Activated CD4-positive, alpha-beta T cell treated with anti-CD3 and anti-CD28 coated beads for 36 hours (primary cell): ENCODE measurements at regions of chr14 and their contacts with region 1.

Region 1: DNA sequence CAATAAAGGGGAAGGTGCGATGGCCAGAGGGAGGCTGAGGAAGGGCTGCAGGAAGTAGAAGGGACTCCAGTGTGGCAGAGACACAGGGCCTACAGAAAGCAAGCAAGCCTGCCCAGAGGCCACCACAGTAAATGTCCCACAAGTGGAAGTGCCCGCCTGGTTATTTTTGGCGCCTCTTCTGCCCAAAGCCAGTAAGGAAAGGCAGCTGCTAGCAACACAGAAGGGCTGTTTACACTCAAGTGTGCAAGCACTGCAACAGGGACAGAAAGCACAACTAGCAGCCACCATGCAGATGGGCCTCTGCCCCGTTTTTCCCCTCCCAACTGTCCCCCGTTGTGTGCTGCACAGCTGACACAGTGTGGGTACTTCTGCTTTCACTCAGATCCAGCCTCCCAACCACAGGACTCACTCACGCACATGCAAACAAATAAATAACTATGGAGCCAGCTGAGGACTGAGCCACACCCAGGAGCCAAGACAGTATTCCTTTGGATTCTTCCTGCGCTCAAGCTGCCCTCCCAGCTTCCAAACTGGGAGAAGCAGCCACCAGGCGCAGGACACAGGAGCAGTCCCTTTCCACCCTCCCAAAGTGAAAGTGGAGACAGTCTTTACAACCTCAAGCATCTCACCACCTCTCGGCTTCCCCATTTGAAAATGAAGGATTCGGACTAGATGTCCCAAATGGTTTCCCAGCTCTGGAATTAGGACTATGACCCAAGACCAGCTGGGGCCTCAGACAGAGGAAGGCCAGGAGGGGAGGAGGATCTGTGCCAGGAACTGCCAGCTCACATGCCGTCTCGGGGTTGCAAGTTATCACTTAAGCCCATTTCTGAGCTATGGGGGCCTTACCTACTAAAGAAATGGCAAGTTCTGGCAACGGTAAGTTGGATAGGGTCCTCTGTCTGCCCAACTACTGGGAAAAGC is 40.0 kb upstream of the PNMA1 start:
- DNase-seq: peak; percentile 80
- ATAC-seq: peak; percentile 45
- H3K4me3 Mint-ChIP-seq: peak overlapping the region; percentile 84
- H3K27ac Mint-ChIP-seq: peak overlapping the region; percentile 94
- H3K4me1 Mint-ChIP-seq: peaks cover 87% of the 10 kb centered on the region
- H3K27me3 Mint-ChIP-seq: no peaks in the 10 kb centered on the region

Region 2: DNA sequence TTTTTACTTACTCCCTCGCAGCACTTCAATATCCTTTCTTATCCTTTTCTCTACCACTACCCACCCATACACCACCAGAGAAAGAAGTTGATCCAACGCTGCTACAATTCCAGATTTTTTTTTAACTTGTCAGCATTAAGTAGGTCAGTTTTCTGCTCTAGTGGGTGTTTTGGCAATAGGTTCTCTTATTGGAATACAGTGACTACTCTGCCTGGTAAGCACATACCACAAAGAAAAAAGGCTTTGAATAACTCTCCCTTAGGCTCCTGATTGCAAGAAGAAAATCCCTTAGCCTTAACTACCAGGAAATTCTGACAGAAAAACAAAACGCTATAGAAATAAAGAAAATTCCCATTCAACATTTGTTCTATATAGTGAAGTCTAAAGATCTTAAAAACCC is 367.9 kb before region 1 on chr14:
- CTCF ChIA-PET with region 1: no interaction called
- POLR2A ChIA-PET with region 1: no interaction called
- intact Hi-C with region 1: no loop called
- DNase-seq: no peak
- ATAC-seq: no peak
- H3K4me3 Mint-ChIP-seq: no peak overlapping the region
- H3K27ac Mint-ChIP-seq: no peak overlapping the region
- H3K4me1 Mint-ChIP-seq: no peaks in the 10 kb centered on the region
- H3K27me3 Mint-ChIP-seq: no peaks in the 10 kb centered on the region

Region 3: DNA sequence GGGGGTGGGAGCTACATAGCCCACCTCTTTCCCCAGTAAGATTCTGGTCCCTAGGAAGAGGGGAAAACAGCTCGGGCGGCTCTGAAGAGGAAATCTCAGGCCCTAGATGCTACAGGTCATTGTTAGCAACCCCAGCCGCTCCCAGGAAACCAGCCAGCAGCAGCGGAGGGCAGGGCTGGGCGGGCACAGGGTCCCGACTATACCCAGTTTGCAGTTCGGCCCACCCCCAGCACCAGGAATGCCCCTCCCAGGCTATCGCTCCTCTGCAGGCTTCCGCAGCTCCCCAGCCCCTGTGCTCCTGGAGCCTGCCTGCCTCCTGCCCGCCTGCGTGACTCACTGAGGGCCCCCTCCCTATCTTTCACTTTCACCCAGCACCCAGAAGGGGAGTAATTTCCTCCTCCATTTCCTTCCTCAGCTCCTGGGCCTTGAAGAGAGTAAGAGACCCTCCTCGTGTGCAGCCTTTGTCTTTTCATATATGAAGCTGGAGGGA is 12.8 kb before region 1 on chr14:
- CTCF ChIA-PET with region 1: interaction called, 116 read pairs
- POLR2A ChIA-PET with region 1: interaction called, 9 read pairs
- intact Hi-C with region 1: loop called (anchors 1 kb)
- DNase-seq: peak; percentile 85
- ATAC-seq: peak; percentile 80
- H3K4me3 Mint-ChIP-seq: peak overlapping the region; percentile 66
- H3K27ac Mint-ChIP-seq: peak overlapping the region; percentile 82
- H3K4me1 Mint-ChIP-seq: peaks cover 65% of the 10 kb centered on the region
- H3K27me3 Mint-ChIP-seq: no peaks in the 10 kb centered on the region

Region 4: DNA sequence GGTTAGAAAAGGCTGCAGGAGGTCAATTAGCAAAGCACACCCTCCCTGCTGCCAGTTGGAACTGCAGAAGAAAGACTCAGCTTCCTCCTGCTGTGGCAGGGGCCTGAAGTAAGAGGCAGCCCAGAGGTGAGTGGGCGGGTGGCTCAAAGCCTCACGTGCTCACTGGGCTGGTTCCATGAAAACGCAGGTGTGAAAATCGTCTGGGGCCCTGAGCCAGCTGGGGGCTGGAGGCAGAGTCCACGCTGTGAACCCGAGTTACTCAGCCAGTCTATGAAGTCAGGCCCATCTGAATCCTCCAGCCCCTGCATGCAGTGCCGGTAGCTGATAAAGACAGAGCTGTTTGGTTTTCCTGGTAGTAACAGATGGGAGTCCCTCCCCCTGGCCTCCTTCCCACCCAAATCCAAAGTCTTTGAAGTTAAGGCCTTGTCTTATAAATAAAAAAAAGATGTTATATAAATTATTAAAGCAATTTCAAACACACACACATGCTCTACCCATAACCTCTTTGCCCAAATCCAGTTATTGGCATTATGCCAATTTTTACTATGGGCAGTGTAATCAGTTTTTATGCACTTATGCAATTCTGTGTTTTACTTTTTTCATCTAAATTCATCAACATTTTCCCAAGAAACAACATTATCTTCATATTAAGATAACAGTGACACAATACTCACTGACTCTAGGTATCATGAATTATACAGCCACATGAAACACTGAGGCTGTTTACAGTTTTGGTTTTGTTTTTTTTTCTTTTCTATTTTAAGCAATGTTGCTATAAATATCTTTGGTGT is 17.8 kb after region 1 on chr14:
- CTCF ChIA-PET with region 1: interaction called, 20 read pairs
- POLR2A ChIA-PET with region 1: interaction called, 22 read pairs
- intact Hi-C with region 1: loop called in 1 of 2 experiments (anchors 2 kb)
- DNase-seq: peak; percentile 90
- ATAC-seq: peak; percentile 80
- H3K4me3 Mint-ChIP-seq: peak overlapping the region; percentile 12
- H3K27ac Mint-ChIP-seq: peak overlapping the region; percentile 89
- H3K4me1 Mint-ChIP-seq: peaks cover 73% of the 10 kb centered on the region
- H3K27me3 Mint-ChIP-seq: no peaks in the 10 kb centered on the region